CD4-positive, alpha-beta memory T cell (primary cell): ENCODE measurements at regions of chr2 and their contacts with region 1.

Region 1: DNA sequence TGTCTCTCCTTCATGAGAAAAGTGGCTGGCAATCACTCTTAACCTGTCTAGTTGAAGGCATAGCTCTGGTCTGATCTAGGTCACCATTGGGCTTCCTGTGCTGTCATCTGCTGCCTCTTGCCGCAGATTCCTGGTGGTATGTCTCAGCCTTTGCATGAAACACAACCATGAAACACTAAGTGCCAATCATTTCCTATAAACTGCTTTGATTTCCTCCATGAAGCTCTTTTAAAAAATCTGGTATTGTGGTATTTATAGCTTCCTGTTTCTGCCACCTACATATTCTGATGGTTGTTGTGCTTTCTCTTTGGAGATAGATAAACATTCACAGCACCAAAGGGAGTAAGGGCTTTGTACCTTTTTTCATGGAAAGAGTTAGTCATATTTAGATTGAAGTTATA is 120.0 kb upstream of the EPC2 start:
- DNase-seq: peak; percentile 79 to 90 (median 87)
- H3K4me3 ChIP-seq: peak overlapping the region in 1 of 2 donors; percentile 26
- H3K4me3 Mint-ChIP-seq: peak overlapping the region; percentile 22 to 89 (median 72)
- H3K27ac ChIP-seq: peak overlapping the region; percentile 60
- H3K27ac Mint-ChIP-seq: peak overlapping the region; percentile 85 to 99 (median 95)
- H3K4me1 ChIP-seq: peaks cover 92% of the 10 kb centered on the region
- H3K4me1 Mint-ChIP-seq: peaks cover 74 to 90% (median 84%) of the 10 kb centered on the region in 4 donors
- H3K27me3 ChIP-seq: no peaks in the 10 kb centered on the region
- H3K27me3 Mint-ChIP-seq: no peaks in the 10 kb centered on the region

Region 2: GRCh38 chr2:148167855-148168254 is 356.7 kb before region 1 on chr2:
- CTCF ChIA-PET with region 1: no interaction called
- POLR2A ChIA-PET with region 1: no interaction called
- intact Hi-C with region 1: no loop called
- DNase-seq: no peak
- H3K4me3 ChIP-seq: no peak overlapping the region
- H3K4me3 Mint-ChIP-seq: no peak overlapping the region
- H3K27ac ChIP-seq: no peak overlapping the region
- H3K27ac Mint-ChIP-seq: no peak overlapping the region
- H3K4me1 ChIP-seq: no peaks in the 10 kb centered on the region
- H3K4me1 Mint-ChIP-seq: peaks cover 0 to 7% (median 0%) of the 10 kb centered on the region in 4 donors
- H3K27me3 ChIP-seq: no peaks in the 10 kb centered on the region
- H3K27me3 Mint-ChIP-seq: no peaks in the 10 kb centered on the region

Region 3: GRCh38 chr2:148338541-148338940 is 186.0 kb before region 1 on chr2:
- CTCF ChIA-PET with region 1: no interaction called
- POLR2A ChIA-PET with region 1: no interaction called
- intact Hi-C with region 1: no loop called
- DNase-seq: no peak
- H3K4me3 ChIP-seq: no peak overlapping the region
- H3K4me3 Mint-ChIP-seq: no peak overlapping the region
- H3K27ac ChIP-seq: no peak overlapping the region
- H3K27ac Mint-ChIP-seq: peak overlapping the region in 1 of 7 donors; percentile 25
- H3K4me1 ChIP-seq: no peaks in the 10 kb centered on the region
- H3K4me1 Mint-ChIP-seq: peaks cover 0 to 2% (median 0%) of the 10 kb centered on the region in 4 donors
- H3K27me3 ChIP-seq: no peaks in the 10 kb centered on the region
- H3K27me3 Mint-ChIP-seq: no peaks in the 10 kb centered on the region

Region 4: DNA sequence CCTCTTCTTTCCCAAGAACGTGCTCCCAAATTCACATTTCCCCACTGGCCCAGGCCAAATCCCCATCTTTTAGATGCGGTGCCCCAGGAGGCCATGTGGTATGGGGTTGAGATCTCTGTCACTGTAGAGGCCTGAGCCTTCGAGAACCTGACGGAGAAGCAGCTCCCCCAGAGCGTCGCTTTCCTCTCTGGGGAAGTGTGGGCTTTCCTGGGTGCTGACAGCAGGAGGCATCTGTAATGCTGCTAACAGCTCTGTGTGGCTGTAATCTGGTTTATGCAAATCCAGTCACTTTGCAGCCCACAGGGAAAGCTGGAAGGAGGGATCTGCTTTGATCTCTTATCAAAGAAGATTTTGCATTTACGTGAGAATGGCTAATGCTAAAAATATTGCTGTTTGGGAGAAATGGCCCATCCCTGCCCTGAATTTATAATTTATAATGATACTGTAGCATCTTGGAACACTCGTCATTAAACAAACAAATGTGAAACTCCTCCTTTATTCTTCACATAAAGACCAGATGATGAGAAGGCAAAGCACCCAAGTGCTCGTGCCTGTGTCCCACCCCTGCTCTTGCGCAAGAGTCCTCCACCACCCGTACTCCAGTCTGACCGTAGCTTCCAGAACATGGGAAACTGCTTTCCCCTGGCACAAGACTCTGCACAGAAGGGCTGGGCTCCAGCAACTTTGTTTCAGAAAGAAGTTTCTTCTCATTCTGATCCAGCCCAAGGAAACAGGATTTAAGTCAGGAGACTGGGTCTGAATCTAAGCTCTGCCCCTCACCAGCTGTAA is 10.1 kb after region 1 on chr2:
- CTCF ChIA-PET with region 1: interaction called, 15 read pairs
- POLR2A ChIA-PET with region 1: interaction called, 48 read pairs
- intact Hi-C with region 1: no loop called
- DNase-seq: no peak
- H3K4me3 ChIP-seq: no peak overlapping the region
- H3K4me3 Mint-ChIP-seq: peak overlapping the region in 3 of 8 donors; percentile 12 to 48 (median 29)
- H3K27ac ChIP-seq: no peak overlapping the region
- H3K27ac Mint-ChIP-seq: peak overlapping the region in 3 of 7 donors; percentile 6 to 60 (median 33)
- H3K4me1 ChIP-seq: peaks cover 46% of the 10 kb centered on the region
- H3K4me1 Mint-ChIP-seq: peaks cover 41 to 81% (median 59%) of the 10 kb centered on the region in 4 donors
- H3K27me3 ChIP-seq: no peaks in the 10 kb centered on the region
- H3K27me3 Mint-ChIP-seq: no peaks in the 10 kb centered on the region

Region 5: GRCh38 chr2:148540022-148540421 is 15.5 kb after region 1 on chr2:
- CTCF ChIA-PET with region 1: interaction called, 15 read pairs
- POLR2A ChIA-PET with region 1: interaction called, 48 read pairs
- intact Hi-C with region 1: no loop called
- DNase-seq: peak in 2 of 5 donors; percentile 17 to 25
- H3K4me3 ChIP-seq: peak overlapping the region in 1 of 2 donors; percentile 13
- H3K4me3 Mint-ChIP-seq: peak overlapping the region; percentile 15 to 79 (median 55)
- H3K27ac ChIP-seq: no peak overlapping the region
- H3K27ac Mint-ChIP-seq: peak overlapping the region; percentile 35 to 89 (median 78)
- H3K4me1 ChIP-seq: peaks cover 22% of the 10 kb centered on the region
- H3K4me1 Mint-ChIP-seq: peaks cover 19 to 55% (median 37%) of the 10 kb centered on the region in 4 donors
- H3K27me3 ChIP-seq: no peaks in the 10 kb centered on the region
- H3K27me3 Mint-ChIP-seq: no peaks in the 10 kb centered on the region

Region 6: GRCh38 chr2:148552675-148553331 is 28.3 kb after region 1 on chr2:
- CTCF ChIA-PET with region 1: interaction called, 11 read pairs
- POLR2A ChIA-PET with region 1: interaction called, 53 read pairs
- intact Hi-C with region 1: loop called (anchors 1 kb)
- DNase-seq: peak; percentile 43 to 58 (median 54)
- H3K4me3 ChIP-seq: peak overlapping the region; percentile 62 to 67
- H3K4me3 Mint-ChIP-seq: no peak overlapping the region
- H3K27ac ChIP-seq: peak overlapping the region; percentile 61
- H3K27ac Mint-ChIP-seq: no peak overlapping the region
- H3K4me1 ChIP-seq: peaks cover 17% of the 10 kb centered on the region
- H3K4me1 Mint-ChIP-seq: peaks cover 0 to 5% (median 3%) of the 10 kb centered on the region in 4 donors
- H3K27me3 ChIP-seq: no peaks in the 10 kb centered on the region
- H3K27me3 Mint-ChIP-seq: no peaks in the 10 kb centered on the region

Region 7: DNA sequence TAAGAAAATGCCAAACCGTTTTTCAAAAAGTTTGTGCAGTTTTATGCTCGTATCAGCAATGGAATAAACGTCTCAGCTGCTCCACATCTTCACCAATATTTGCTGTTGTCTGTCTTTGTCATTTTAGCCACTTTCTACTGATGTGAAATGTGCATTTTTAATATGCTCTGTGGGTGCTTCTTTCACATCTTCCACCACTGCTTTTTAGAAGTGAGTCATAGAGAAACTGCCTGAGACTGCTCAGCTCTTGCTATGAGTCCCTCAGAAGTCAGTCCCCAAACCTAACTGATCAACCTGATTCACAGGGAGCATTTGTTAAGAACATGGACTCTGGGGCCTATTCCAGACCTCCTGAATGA is 79.0 kb after region 1 on chr2:
- CTCF ChIA-PET with region 1: no interaction called
- POLR2A ChIA-PET with region 1: no interaction called
- intact Hi-C with region 1: no loop called
- DNase-seq: no peak
- H3K4me3 ChIP-seq: no peak overlapping the region
- H3K4me3 Mint-ChIP-seq: peak overlapping the region in 1 of 8 donors; percentile 5
- H3K27ac ChIP-seq: no peak overlapping the region
- H3K27ac Mint-ChIP-seq: no peak overlapping the region
- H3K4me1 ChIP-seq: no peaks in the 10 kb centered on the region
- H3K4me1 Mint-ChIP-seq: peaks cover 0 to 4% (median 1%) of the 10 kb centered on the region in 4 donors
- H3K27me3 ChIP-seq: no peaks in the 10 kb centered on the region
- H3K27me3 Mint-ChIP-seq: peaks cover 0 to 2% of the 10 kb centered on the region in 2 donors